ENCODE measurements at regions of chr2 and their contacts with region 1.

Region 1: GRCh38 chr2:200901459-200902072 is 12.4 kb downstream of the NIF3L1 start:
- DNase-seq: peak; percentile 18 to 83 (median 76)
- ATAC-seq: peak; percentile 100
- H3K4me3 ChIP-seq: no peak overlapping the region
- H3K4me3 Mint-ChIP-seq: no peak overlapping the region
- H3K27ac ChIP-seq: no peak overlapping the region
- H3K27ac Mint-ChIP-seq: peak overlapping the region; percentile 4 to 86 (median 44)
- H3K4me1 ChIP-seq: no peaks in the 10 kb centered on the region
- H3K4me1 Mint-ChIP-seq: peaks cover 0 to 27% (median 6%) of the 10 kb centered on the region in 7 donors
- H3K27me3 ChIP-seq: no peaks in the 10 kb centered on the region
- H3K27me3 Mint-ChIP-seq: no peaks in the 10 kb centered on the region

Region 2: DNA sequence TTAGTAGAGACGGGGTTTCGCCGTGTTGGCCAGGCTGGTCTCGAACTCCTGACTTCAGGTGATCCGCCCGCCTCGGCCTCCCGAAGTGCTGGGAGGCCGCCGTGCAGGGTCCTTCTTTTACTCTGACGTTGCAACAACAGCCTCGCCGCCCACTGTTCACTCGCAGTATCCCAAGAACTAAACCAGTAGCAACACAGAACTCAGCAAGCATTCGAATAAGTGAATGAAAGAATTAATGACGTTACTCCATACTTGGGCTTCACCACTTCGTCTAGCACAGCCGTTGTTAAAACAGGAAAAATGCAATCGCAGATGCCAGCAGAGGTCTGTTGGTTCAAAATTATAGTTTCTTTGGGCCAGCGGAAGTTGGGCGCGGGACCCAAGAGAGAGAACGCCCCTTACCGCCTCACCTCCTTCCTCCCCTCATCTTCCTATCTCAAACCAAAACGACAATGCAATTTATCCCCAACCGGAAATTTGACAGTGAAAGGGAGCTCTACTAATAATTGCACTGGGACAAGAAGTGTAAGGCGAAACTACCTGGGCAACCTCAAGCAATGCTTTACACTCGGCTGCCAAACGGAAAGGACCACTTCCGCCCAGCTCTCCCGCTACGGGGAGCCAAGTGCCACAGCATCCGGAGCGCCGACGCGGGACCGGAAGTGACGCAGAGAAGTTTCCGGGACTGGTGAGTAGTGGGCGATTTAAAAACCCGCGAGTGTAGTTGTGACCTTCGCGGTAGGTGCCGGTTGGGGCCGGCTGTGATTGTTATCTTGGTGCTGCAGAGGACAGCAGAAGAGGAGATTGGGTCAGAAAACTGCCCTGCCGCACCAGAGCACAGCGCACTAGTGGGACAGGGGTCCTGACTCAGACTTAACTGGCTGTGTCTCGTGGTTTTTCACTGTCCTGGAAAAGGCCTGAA is 12.6 kb before region 1 on chr2 and contains the starts of genes NIF3L1 and PPIL3:
- CTCF ChIA-PET with region 1: no interaction called
- POLR2A ChIA-PET with region 1: interaction called, 9 read pairs
- intact Hi-C with region 1: loop called (anchors 1 kb)
- DNase-seq: peak; percentile 88 to 97 (median 95)
- ATAC-seq: peak; percentile 89
- H3K4me3 ChIP-seq: peak within 1 kb of the TSS; percentile 83
- H3K4me3 Mint-ChIP-seq: peak within 1 kb of the TSS; percentile 88 to 100 (median 96)
- H3K27ac ChIP-seq: peak within 1 kb of the TSS; percentile 86
- H3K27ac Mint-ChIP-seq: peak within 1 kb of the TSS; percentile 97 to 100 (median 100)
- H3K4me1 ChIP-seq: peaks cover 23 to 26% of the 10 kb centered on the region in 2 donors
- H3K4me1 Mint-ChIP-seq: peaks cover 35 to 75% (median 60%) of the 10 kb centered on the region in 7 donors
- H3K27me3 ChIP-seq: no peaks in the 10 kb centered on the region
- H3K27me3 Mint-ChIP-seq: no peaks in the 10 kb centered on the region
- total RNA-seq, gene NIF3L1: 11.5 to 33.9 (median 31.4) TPM
- total RNA-seq, gene PPIL3: 28.5 to 69.7 (median 49.1) TPM

Region 3: GRCh38 chr2:201363857-201364560 is 462.4 kb after region 1 on chr2:
- CTCF ChIA-PET with region 1: no interaction called
- POLR2A ChIA-PET with region 1: no interaction called
- intact Hi-C with region 1: loop called in 1 of 2 experiments (anchors 1 kb)
- DNase-seq: peak in 7 of 9 donors; percentile 21 to 64 (median 61)
- ATAC-seq: peak; percentile 96
- H3K4me3 ChIP-seq: no peak overlapping the region
- H3K4me3 Mint-ChIP-seq: peak overlapping the region in 5 of 10 donors; percentile 11 to 49 (median 32)
- H3K27ac ChIP-seq: no peak overlapping the region
- H3K27ac Mint-ChIP-seq: peak overlapping the region in 7 of 9 donors; percentile 9 to 84 (median 75)
- H3K4me1 ChIP-seq: peaks cover 0 to 24% of the 10 kb centered on the region in 2 donors
- H3K4me1 Mint-ChIP-seq: peaks cover 11 to 45% (median 41%) of the 10 kb centered on the region in 7 donors
- H3K27me3 ChIP-seq: no peaks in the 10 kb centered on the region
- H3K27me3 Mint-ChIP-seq: no peaks in the 10 kb centered on the region

Measured in naive thymus-derived CD4-positive, alpha-beta T cell (primary cell).